ENCODE measurements at regions of chr1 and their contacts with region 1.

Region 1: DNA sequence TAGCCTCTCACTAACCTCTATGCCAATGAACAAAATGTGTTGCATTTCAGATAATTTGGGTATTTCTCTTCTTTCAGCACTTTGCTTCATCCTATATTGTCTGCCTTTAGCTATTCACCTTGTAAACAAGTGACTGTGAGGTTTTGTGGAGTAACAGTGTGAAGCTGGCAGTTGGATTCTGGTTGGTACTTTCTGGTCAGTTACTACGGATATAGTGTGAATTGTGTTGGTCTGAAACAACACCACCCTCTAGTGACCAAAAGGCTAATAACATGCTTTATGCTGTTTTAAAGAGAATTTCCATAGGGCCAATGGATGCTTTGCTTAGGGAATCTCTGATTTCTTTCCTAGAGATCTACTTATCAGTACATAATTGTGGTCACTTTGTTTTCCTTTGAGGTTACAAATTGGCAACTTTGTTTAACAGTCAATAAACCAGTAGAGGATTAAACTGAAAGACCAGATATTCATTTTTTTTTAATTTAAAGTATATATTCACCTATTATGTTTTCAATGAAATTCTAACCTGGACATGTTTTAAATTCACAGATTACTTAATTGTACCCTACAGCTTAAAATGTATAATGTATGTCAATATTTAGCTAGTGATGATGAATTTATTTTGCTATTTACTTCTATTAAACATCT is 2.5 kb upstream of the PTGER3 start:
- DNase-seq: peak; percentile 88
- H3K4me3 ChIP-seq: no peak overlapping the region
- H3K27ac ChIP-seq: no peak overlapping the region
- H3K4me1 ChIP-seq: peaks cover 30% of the 10 kb centered on the region
- H3K27me3 ChIP-seq: no peaks in the 10 kb centered on the region
- CTCF ChIP-seq: peak; percentile 87

Region 2: GRCh38 chr1:69967245-69967766 is 1082.8 kb before region 1 on chr1:
- CTCF ChIA-PET with region 1: no interaction called
- POLR2A ChIA-PET with region 1: no interaction called
- intact Hi-C with region 1: no loop called
- DNase-seq: peak; percentile 29
- H3K4me3 ChIP-seq: no peak overlapping the region
- H3K27ac ChIP-seq: no peak overlapping the region
- H3K4me1 ChIP-seq: no peaks in the 10 kb centered on the region
- H3K27me3 ChIP-seq: no peaks in the 10 kb centered on the region
- CTCF ChIP-seq: no peak

Region 3: GRCh38 chr1:70142075-70142474 is 908.0 kb before region 1 on chr1:
- CTCF ChIA-PET with region 1: no interaction called
- POLR2A ChIA-PET with region 1: no interaction called
- intact Hi-C with region 1: no loop called
- DNase-seq: no peak
- H3K4me3 ChIP-seq: no peak overlapping the region
- H3K27ac ChIP-seq: no peak overlapping the region
- H3K4me1 ChIP-seq: no peaks in the 10 kb centered on the region
- H3K27me3 ChIP-seq: no peaks in the 10 kb centered on the region
- CTCF ChIP-seq: peak; percentile 44

Region 4: GRCh38 chr1:70227439-70227838 is 822.6 kb before region 1 on chr1:
- CTCF ChIA-PET with region 1: no interaction called
- POLR2A ChIA-PET with region 1: no interaction called
- intact Hi-C with region 1: no loop called
- DNase-seq: no peak
- H3K4me3 ChIP-seq: no peak overlapping the region
- H3K27ac ChIP-seq: peak overlapping the region; percentile 33
- H3K4me1 ChIP-seq: peaks cover 22% of the 10 kb centered on the region
- H3K27me3 ChIP-seq: no peaks in the 10 kb centered on the region
- CTCF ChIP-seq: no peak

Region 5: DNA sequence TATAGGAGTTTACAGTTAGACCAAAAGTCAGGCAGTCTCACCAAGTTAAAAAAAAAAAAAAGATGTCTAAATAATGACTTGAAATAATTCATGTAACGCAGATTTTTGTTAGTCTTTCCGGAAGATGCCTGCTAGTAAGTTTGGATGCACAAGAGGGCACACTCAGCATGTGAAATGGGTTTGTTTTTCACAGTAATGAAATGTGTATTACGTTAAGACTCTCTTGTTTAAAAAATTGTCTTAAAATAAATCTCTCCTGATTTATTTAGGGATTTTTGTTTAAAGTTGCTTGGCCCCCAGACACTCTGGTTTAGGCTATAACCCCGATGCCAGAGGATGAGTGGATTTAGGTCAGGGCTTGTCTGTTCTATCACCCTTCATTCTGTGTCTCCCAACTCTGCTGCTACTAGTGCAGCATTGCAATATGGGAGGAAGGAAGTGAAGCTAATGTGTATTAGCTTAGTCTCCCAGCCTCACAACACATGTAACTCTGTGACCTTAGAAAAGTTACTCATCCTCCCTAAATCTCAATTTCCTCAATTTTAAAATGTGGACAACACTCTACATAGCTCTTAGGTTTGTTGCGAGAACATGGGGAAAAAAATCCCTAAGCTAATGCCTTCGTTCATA is 613.3 kb before region 1 on chr1:
- CTCF ChIA-PET with region 1: no interaction called
- POLR2A ChIA-PET with region 1: no interaction called
- intact Hi-C with region 1: loop called (anchors 10 kb)
- DNase-seq: peak; percentile 64
- H3K4me3 ChIP-seq: no peak overlapping the region
- H3K27ac ChIP-seq: no peak overlapping the region
- H3K4me1 ChIP-seq: peaks cover 9% of the 10 kb centered on the region
- H3K27me3 ChIP-seq: no peaks in the 10 kb centered on the region
- CTCF ChIP-seq: peak; percentile 66

Region 6: DNA sequence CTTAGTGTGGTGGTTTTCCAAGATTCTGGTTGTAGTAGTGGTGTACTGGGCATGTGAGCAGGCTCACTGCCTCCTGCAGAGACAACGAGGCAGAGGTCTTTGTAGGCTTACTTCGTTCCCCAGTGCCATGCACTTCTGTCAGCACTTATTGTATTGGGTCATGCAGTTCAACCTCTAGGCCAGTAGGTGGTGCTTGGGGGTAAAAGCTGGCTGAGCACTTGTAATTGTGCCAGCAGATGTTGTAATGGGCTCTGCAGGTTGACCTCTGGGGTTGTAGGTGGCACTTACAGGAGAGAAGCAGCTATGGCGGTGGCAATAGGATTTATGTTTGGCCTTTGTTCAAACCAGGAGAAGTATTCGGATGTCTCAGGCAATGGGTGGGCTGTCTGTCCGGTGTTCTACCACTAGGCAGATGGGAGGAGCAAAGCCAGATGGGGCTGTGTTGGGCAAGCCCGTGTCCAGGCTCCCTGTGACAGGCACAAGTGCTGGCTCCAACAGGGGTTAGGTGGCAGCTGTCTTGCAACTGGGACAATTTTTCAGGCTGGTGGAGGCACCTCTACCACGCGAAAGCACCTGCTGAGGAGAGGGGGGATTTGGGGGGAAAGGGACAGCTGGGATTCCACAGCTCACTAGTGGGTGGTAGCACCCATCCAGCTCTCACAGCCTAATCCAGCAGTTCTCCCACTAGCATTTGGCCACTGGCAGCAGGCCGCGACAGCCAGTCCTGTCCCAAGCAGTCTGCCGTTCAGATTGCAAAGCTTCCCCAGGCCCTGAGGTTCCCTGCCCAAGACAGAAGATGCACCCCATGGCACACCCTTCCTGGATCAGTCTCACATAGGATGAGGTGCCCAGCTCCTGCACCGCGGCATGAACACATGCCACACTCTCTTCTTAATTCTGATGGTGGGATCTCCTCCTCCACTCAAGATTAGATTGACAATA is 364.5 kb before region 1 on chr1:
- CTCF ChIA-PET with region 1: interaction called, 4 read pairs
- POLR2A ChIA-PET with region 1: no interaction called
- intact Hi-C with region 1: loop called (anchors 2 kb)
- DNase-seq: peak; percentile 84
- H3K4me3 ChIP-seq: no peak overlapping the region
- H3K27ac ChIP-seq: no peak overlapping the region
- H3K4me1 ChIP-seq: peaks cover 7% of the 10 kb centered on the region
- H3K27me3 ChIP-seq: no peaks in the 10 kb centered on the region
- CTCF ChIP-seq: peak; percentile 93

Region 7: GRCh38 chr1:70737134-70737533 is 312.9 kb before region 1 on chr1:
- CTCF ChIA-PET with region 1: no interaction called
- POLR2A ChIA-PET with region 1: no interaction called
- intact Hi-C with region 1: loop called (anchors 5 kb)
- DNase-seq: peak; percentile 87
- H3K4me3 ChIP-seq: no peak overlapping the region
- H3K27ac ChIP-seq: no peak overlapping the region
- H3K4me1 ChIP-seq: peaks cover 28% of the 10 kb centered on the region
- H3K27me3 ChIP-seq: no peaks in the 10 kb centered on the region
- CTCF ChIP-seq: peak; percentile 40; the same call in 1 of the 2 replicates

Region 8: GRCh38 chr1:70990469-70991253 is 59.4 kb before region 1 on chr1:
- CTCF ChIA-PET with region 1: no interaction called
- POLR2A ChIA-PET with region 1: no interaction called
- intact Hi-C with region 1: no loop called
- DNase-seq: no peak
- H3K4me3 ChIP-seq: no peak overlapping the region
- H3K27ac ChIP-seq: no peak overlapping the region
- H3K4me1 ChIP-seq: peaks cover 48% of the 10 kb centered on the region
- H3K27me3 ChIP-seq: no peaks in the 10 kb centered on the region
- CTCF ChIP-seq: no peak

Measured in A673 (cell line).